Endothelial cell of umbilical vein (primary cell): ENCODE measurements at regions of chr4 and their contacts with region 1.

Region 1: DNA sequence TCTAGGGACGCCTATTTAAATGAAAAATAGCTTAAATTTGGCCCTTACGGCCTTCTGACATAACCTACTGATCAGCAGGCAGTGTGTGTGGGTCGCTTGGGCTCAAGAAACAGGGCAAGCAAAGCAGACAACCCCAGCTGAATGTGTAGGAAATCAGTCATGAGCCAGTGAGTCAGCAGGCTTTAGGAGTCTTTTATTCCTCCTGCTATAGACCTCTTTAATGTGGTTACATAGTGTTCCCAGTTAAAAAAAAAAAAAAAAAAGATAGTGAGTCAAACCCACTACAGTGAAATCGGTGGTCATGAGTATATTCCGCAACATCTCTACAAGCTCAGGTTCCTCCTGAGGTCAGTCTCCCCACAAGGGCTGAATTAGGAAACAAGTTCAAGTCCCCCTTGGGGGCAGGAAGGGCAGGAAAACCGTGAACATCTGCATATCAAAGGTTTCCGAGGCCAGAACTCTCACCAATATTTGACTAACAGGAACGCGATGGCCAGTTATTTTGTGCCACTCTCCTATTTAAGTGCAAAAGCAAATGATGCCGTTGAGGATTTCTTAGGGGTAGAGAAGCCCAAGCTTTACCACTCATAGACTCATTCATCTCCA is 32.7 kb downstream of the ACSL1 start:
- DNase-seq: peak; percentile 76
- H3K4me3 ChIP-seq: no peak overlapping the region
- H3K27ac ChIP-seq: peak overlapping the region; percentile 66
- H3K4me1 ChIP-seq: peaks cover 15% of the 10 kb centered on the region
- H3K27me3 ChIP-seq: no peaks in the 10 kb centered on the region
- CTCF ChIP-seq: no peak
- POLR2A ChIP-seq: no peak

Region 2: GRCh38 chr4:184763150-184763780 is 29.8 kb before region 1 on chr4:
- CTCF ChIA-PET with region 1: no interaction called
- POLR2A ChIA-PET with region 1: no interaction called
- dilution Hi-C with region 1: no loop called
- intact Hi-C with region 1: no loop called
- DNase-seq: no peak
- H3K4me3 ChIP-seq: no peak overlapping the region
- H3K27ac ChIP-seq: no peak overlapping the region
- H3K4me1 ChIP-seq: no peaks in the 10 kb centered on the region
- H3K27me3 ChIP-seq: no peaks in the 10 kb centered on the region
- CTCF ChIP-seq: no peak
- POLR2A ChIP-seq: no peak

Region 3: DNA sequence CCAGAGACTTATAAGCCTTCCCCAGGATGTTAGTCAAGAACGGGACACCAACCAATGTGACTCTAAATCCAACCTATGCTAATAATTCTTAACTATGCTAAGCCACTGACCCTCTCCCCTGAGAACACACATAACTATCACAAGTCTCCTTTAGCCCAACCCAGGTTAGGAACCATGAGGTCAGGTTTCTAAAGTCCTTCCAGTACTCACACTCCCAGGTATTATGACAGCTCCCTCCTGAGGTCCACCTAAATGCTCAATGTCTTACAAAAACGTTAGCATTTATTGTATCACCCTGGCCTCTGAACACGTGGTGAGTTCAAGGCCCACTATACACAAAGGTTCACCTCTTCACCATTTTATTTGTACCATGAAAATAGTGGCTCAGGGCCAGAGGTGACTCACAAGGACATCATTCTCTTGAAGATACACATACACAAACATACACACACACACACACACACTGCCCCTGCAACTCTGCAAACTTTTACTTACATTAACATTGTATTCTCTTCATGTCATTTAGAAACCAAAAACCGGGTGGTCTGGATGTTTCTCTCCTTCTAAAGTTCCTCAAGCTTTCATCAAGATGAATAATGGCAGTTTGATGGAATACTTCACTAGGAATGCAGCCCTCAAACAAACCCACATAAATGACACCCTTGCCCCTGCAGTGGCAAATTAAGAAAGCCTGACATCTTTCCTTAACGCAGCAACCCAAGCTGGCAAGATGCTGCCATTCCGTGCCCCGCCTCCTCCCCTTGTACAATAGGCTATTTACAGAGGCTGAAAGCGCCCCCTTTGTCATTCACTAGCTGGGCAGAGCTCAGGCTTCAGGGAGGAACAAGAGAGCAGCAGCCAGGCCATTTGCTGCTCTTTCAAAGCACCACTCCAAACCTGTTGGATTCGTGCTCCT is 15.0 kb after region 1 on chr4:
- CTCF ChIA-PET with region 1: interaction called, 5 read pairs
- POLR2A ChIA-PET with region 1: no interaction called
- dilution Hi-C with region 1: no loop called
- intact Hi-C with region 1: loop called (anchors 1 kb)
- DNase-seq: peak; percentile 44
- H3K4me3 ChIP-seq: no peak overlapping the region
- H3K27ac ChIP-seq: no peak overlapping the region
- H3K4me1 ChIP-seq: peaks cover 9% of the 10 kb centered on the region
- H3K27me3 ChIP-seq: no peaks in the 10 kb centered on the region
- CTCF ChIP-seq: no peak
- POLR2A ChIP-seq: no peak